ENCODE measurements at regions of chr2 and their contacts with region 1.

Region 1: DNA sequence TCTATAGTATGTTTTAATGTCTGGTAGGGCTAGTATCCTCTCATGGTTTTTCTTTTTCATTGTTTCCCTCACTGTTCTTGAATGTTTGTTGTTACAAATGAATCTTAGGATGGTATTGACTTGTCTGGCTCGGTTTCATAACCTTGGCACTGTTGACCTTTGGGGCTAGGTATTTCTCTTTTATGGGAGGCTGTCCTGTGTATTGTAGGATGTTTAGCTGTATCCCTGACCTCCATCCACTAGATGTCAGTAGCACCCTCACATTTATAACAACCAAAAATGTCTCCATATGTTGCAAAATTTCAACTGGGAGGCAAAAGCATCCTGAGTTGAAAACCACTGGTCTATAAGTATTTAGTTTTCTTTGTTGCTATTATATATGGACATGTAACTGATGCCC is 7.0 kb upstream of the AOX1 start:
- DNase-seq: no peak
- H3K4me3 ChIP-seq: no peak overlapping the region
- H3K27ac ChIP-seq: no peak overlapping the region
- H3K27me3 ChIP-seq: no peaks in the 10 kb centered on the region
- CTCF ChIP-seq: peak; percentile 64

Region 2: DNA sequence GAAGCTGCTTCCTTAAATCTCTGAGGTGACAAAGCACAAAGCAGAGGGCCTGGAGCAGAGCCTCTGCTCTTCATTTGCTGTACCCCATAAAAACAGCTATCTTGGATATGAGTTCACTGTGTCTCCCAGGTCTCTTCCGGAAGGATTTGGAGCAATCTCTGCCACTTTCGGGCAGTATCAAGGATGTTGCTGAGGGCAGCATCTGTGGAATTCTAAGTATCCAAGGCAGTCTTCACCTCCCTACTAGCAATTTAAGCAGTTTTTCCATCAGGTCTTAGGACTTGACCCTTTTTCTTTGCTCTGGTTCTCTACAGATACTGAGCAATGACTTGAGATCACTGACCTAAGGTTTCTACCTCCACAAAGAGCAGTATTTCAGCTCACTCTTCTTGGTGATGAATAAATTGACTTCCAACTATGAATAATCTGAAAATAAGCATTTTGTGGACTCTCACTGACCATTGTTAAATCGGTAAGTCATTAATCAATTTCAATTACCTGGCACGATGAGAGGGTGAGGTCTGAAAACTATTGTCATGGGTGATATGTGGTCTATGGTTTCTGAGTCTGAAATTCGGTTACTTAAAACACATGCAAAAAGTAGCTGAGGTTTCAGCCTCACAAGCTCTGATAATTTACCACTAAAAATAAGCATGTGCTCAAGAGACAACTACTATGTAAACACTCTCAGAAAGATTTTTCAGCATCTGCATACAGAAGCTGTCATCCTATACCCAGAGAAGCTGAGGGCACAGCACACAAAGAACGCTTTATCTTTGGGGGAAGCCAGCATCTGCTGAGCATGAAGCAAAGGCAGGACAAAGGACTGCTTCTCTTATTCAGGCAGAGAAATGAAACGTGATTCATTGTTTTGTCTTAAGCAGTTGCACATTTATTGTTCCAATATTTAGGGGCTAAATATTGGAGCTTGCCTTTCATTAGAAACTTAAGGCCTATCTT is 304.4 kb before region 1 on chr2:
- CTCF ChIA-PET with region 1: no interaction called
- POLR2A ChIA-PET with region 1: no interaction called
- DNase-seq: no peak
- H3K4me3 ChIP-seq: no peak overlapping the region
- H3K27ac ChIP-seq: no peak overlapping the region
- H3K27me3 ChIP-seq: no peaks in the 10 kb centered on the region
- CTCF ChIP-seq: no peak

Region 3: GRCh38 chr2:200479692-200480265 is 99.0 kb before region 1 on chr2:
- CTCF ChIA-PET with region 1: no interaction called
- POLR2A ChIA-PET with region 1: no interaction called
- DNase-seq: peak; percentile 54
- H3K4me3 ChIP-seq: no peak overlapping the region
- H3K27ac ChIP-seq: peak overlapping the region; percentile 89
- H3K27me3 ChIP-seq: no peaks in the 10 kb centered on the region
- CTCF ChIP-seq: no peak

Region 4: GRCh38 chr2:200540793-200541192 is 38.0 kb before region 1 on chr2:
- CTCF ChIA-PET with region 1: interaction called, 14 read pairs
- POLR2A ChIA-PET with region 1: no interaction called
- DNase-seq: no peak
- H3K4me3 ChIP-seq: no peak overlapping the region
- H3K27ac ChIP-seq: no peak overlapping the region
- H3K27me3 ChIP-seq: no peaks in the 10 kb centered on the region
- CTCF ChIP-seq: no peak

Region 5: GRCh38 chr2:200603982-200604381 is 25.2 kb after region 1 on chr2:
- CTCF ChIA-PET with region 1: interaction called, 16 read pairs
- POLR2A ChIA-PET with region 1: no interaction called
- DNase-seq: peak; percentile 43
- H3K4me3 ChIP-seq: no peak overlapping the region
- H3K27ac ChIP-seq: peak overlapping the region; percentile 73
- H3K27me3 ChIP-seq: no peaks in the 10 kb centered on the region
- CTCF ChIP-seq: no peak

Region 6: DNA sequence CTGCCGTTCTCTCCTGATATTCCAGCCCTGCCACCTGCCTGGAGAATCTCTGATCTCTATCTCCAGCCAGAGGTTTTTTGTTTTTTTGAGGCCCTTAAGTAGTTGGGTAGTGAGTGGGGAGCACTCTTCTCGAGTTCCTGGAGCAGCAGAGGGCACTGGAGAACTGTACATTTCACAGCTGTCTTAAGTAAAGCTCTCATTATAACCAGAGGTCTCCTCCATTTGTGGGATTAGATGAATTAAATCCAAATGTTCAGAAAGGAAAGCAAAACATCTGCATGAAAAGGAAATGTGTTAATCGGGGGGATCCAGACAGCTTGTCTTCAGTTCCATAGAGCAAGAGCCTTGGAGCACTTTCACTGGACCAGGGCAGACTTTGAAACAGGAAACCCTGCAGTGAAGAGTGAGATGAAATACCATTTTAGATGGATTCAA is 39.8 kb after region 1 on chr2:
- CTCF ChIA-PET with region 1: interaction called, 11 read pairs
- POLR2A ChIA-PET with region 1: no interaction called
- DNase-seq: no peak
- H3K4me3 ChIP-seq: no peak overlapping the region
- H3K27ac ChIP-seq: no peak overlapping the region
- H3K27me3 ChIP-seq: no peaks in the 10 kb centered on the region
- CTCF ChIP-seq: peak; percentile 52

Region 7: GRCh38 chr2:200735061-200735460 is 156.3 kb after region 1 on chr2:
- CTCF ChIA-PET with region 1: interaction called, 10 read pairs
- POLR2A ChIA-PET with region 1: no interaction called
- DNase-seq: no peak
- H3K4me3 ChIP-seq: no peak overlapping the region
- H3K27ac ChIP-seq: no peak overlapping the region
- H3K27me3 ChIP-seq: peaks cover 18% of the 10 kb centered on the region
- CTCF ChIP-seq: no peak

Measured in AG04450 (cell line).